Left colon (tissue), 2 donors: ENCODE measurements at regions of chr11 and their contacts with region 1.

Region 1: GRCh38 chr11:78574386-78575381 is at the start of gene NARS2:
- DNase-seq: peak; percentile 97 to 99
- ATAC-seq: peak; percentile 97
- total RNA-seq, gene NARS2: 12.3 to 14.2 TPM

Region 2: GRCh38 chr11:78416305-78417178 is 158.1 kb before region 1 on chr11:
- intact Hi-C with region 1: loop called in 1 of 2 experiments (anchors 5 kb)
- DNase-seq: peak; percentile 84 to 85
- ATAC-seq: peak; percentile 65

Region 3: DNA sequence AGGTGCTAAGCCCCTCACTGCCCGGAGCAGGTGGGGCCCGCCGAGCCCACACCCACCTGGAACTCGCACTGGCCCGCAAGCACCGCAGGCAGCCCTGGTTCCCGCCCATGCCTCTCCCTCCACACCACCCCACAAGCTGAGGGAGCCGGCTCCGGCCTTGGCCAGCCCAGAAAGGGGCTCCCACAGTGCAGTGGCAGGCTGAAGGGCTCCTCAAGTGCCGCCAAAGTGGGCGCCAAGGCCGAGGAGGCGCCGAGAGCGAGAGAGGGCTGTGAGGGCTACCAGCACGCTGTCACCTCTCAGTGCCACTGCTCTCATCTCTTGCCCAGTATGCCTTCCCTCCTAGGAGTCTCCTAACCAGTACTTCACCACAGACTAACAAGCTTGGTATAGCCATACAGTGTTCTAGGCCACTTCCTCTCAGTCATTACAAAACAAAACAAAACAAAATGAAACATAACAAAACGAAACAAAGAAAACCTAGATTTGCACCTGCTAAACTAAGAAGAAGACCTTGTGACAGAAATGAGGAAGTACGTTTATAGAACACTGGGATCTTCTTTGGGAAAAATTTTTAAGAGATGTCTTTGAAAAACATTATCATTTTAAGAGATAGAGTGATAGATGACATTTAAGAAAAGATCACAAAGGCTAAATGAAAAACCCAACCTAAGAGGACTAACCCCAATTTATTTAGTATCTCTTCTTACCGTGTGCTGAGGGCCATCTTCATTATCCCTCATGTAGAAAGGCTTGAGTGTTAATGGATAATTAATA is 109.3 kb before region 1 on chr11:
- intact Hi-C with region 1: no loop called
- DNase-seq: peak in 1 of 2 donors; percentile 18
- ATAC-seq: peak; percentile 32

Region 4: DNA sequence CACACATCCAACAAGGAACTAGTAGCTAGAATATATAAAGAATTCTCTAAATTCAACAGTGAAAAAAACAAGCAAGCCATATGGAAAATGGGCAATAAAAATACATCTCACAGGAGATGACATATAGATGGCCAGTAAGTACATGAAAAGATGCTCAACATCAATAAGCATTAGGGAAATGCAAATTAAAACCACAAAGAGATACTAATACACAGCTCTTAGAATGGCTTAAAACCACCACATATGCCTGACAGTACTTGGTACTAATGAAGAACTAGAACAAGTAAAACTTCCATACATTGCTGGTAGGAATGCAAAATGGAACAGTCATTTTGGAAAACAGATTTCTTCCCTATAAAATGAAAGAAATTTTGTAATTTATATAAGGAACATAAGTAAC is 85.5 kb before region 1 on chr11:
- intact Hi-C with region 1: no loop called
- DNase-seq: no peak
- ATAC-seq: no peak

Region 5: GRCh38 chr11:78742430-78742829 is 167.7 kb after region 1 on chr11:
- intact Hi-C with region 1: no loop called
- DNase-seq: peak; percentile 84 to 88
- ATAC-seq: peak; percentile 95